ENCODE measurements at regions of chr11 and their contacts with region 1.

Region 1: DNA sequence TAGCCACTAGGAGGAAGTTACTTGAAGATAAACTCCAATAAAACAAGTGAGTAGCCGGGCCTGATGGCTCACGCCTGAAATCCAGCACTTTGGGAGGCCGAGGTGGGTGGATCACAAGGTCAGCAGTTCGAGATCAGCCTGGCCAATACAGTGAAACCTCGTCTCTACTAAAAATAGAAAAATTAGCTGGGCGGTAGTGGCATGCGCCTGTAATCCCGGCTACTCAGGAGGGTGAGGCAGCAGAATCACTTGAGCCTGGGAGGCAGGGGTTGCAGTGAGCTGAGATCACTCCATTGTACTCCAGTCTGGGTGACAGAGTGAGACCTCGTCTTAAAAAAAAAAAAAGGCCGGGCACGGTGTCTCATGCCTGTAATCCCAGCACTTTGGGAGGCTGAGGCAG is 34.0 kb upstream of the CLPB start:
- DNase-seq: no peak
- ATAC-seq: no peak
- H3K4me3 ChIP-seq: no peak overlapping the region
- H3K27ac ChIP-seq: no peak overlapping the region
- H3K4me1 ChIP-seq: no peaks in the 10 kb centered on the region
- H3K27me3 ChIP-seq: no peaks in the 10 kb centered on the region
- CTCF ChIP-seq: no peak

Region 2: DNA sequence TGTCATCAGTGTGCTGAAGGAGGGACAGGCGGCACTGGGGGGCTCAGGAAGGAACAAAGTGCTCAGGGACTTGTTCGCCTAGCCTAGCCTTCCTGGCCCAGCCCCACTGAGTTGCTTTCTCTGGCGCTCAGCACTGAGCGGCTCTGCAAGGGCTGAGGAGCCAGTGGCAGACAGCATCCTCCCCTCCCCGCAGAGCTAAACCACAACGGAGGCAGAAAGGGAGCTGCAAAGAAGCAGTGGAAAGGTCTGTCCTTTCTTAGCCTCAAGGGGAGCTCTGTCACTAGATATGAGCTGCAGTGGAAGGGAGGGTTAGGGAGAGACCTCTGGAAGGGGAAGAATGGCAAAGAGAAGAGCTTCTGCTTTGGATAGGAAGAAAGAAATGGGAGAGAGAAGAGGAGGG is 134.6 kb before region 1 on chr11:
- intact Hi-C with region 1: no loop called
- DNase-seq: no peak
- ATAC-seq: no peak
- H3K4me3 ChIP-seq: no peak overlapping the region
- H3K27ac ChIP-seq: no peak overlapping the region
- H3K4me1 ChIP-seq: no peaks in the 10 kb centered on the region
- H3K27me3 ChIP-seq: no peaks in the 10 kb centered on the region
- CTCF ChIP-seq: no peak

Region 3: DNA sequence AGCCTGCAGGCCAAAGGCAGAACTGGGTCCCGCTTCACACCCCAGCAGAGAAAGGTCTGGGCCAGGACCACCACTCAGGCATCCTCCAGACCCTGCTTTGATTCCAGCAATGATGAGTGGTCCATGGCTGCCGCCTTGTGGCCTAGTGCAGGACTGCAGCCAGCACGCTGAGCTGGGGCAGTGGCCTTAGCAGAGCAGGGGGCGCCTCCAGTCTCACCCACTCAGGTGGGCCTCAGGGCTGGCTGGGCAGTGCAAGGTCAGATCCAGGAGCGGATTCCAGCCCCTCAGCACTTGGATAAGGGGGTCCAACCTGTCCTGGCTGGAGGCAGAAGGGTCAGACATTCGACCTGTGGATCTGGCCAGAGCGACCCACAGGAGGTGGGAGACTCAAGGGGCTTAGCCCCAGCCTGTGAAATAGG is 215.5 kb after region 1 on chr11:
- intact Hi-C with region 1: loop called in 1 of 3 experiments (anchors 10 kb)
- DNase-seq: peak in 5 of 6 donors; percentile 27 to 88 (median 67)
- ATAC-seq: peak; percentile 66 to 77 (median 74)
- H3K4me3 ChIP-seq: no peak overlapping the region
- H3K27ac ChIP-seq: no peak overlapping the region
- H3K4me1 ChIP-seq: no peaks in the 10 kb centered on the region
- H3K27me3 ChIP-seq: no peaks in the 10 kb centered on the region
- CTCF ChIP-seq: peak; percentile 68 to 94 (median 86)

Measured in pancreas (tissue), 10 donors.